GM12878 (cell line): ENCODE measurements at regions of chr12 and their contacts with region 1.

Region 1: GRCh38 chr12:46153268-46153872 is 115.5 kb downstream of the SLC38A1 start:
- DNase-seq: no peak
- ATAC-seq: peak; percentile 56
- H3K4me3 ChIP-seq: no peak overlapping the region
- H3K27ac ChIP-seq: no peak overlapping the region
- H3K4me1 ChIP-seq: no peaks in the 10 kb centered on the region
- H3K27me3 ChIP-seq: no peaks in the 10 kb centered on the region
- CTCF ChIP-seq: peak; percentile 59 to 76 (median 64); a peak in 5 of 6 replicates
- EP300 ChIP-seq: no peak
- POLR2A ChIP-seq: no peak
- RAD21 ChIP-seq: peak; percentile 93

Region 2: DNA sequence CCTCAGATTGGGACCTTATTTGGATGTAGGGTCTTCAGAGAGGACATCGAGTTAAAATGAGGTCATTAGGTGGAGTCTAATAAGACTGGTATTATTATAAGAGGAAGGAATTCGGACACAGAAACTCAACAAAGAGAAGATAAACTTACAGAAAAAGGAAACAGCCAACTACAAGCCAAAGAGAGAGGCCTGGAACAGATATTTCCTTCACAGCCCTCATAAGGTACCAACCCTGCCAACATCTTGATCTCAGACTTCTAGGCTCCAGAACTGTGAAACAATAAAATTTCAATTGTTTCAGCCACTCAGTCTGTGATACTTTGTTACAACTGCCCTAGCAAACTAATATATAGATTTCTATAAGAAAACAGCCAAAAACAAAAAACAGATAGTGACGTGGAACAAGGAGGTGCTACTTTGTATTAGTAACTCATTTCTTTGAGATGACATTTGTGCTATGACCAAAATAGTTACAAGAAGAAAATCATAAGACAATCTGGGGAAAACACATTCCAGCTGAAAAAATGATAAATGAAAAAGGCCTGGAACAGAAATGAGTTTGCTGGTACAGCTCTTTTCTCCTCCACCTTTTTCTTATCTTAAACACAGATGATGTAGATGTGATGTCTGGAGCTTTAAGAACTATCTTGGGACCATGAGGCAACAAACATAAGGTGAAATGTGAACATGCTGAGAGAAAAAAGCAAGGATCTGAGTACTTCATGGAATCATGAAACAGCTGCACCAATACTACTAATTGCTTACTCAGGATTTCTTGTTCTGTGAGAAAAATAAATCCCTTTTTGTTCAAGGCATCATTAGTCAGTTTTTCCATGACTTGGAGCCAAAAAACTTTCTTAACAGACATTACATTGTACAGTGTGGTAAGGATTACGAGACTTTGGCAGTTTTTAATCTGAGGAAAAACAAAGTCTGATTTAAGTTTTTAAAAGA is 694.2 kb before region 1 on chr12:
- CTCF ChIA-PET with region 1: no interaction called
- POLR2A ChIA-PET with region 1: no interaction called
- RAD21 ChIA-PET with region 1: no interaction called
- SMC1A ChIA-PET with region 1: no interaction called
- in situ Hi-C with region 1: no loop called
- intact Hi-C with region 1: no loop called
- DNase-seq: no peak
- ATAC-seq: no peak
- H3K4me3 ChIP-seq: no peak overlapping the region
- H3K27ac ChIP-seq: no peak overlapping the region
- H3K4me1 ChIP-seq: no peaks in the 10 kb centered on the region
- H3K27me3 ChIP-seq: no peaks in the 10 kb centered on the region; a peak in 1 of 4 replicates
- CTCF ChIP-seq: no peak
- EP300 ChIP-seq: no peak
- POLR2A ChIP-seq: no peak
- RAD21 ChIP-seq: no peak

Region 3: DNA sequence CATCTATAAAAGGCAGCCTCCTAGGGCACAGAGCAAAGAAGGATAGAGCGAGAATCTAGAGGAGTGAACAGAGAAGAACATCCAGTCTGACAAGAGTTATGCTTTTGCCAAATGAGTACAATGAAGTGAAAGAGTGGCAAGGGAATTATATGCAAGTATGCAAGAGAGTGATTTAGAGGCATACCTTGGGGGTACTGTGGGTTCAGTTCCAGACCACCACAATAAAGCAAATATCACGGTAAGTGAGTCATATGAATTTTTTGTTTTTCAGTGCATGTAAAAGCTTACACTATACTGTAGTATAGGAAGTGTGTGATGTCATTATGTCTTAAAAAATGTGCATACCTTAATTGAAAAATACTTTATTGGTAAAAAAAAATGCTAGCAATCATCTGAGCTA is 14.0 kb after region 1 on chr12:
- CTCF ChIA-PET with region 1: interaction called, 11 read pairs
- POLR2A ChIA-PET with region 1: no interaction called
- RAD21 ChIA-PET with region 1: interaction called, 3 read pairs
- SMC1A ChIA-PET with region 1: interaction called, 35 read pairs
- in situ Hi-C with region 1: no loop called
- intact Hi-C with region 1: no loop called
- DNase-seq: no peak
- ATAC-seq: no peak
- H3K4me3 ChIP-seq: no peak overlapping the region
- H3K27ac ChIP-seq: no peak overlapping the region
- H3K4me1 ChIP-seq: no peaks in the 10 kb centered on the region
- H3K27me3 ChIP-seq: no peaks in the 10 kb centered on the region
- CTCF ChIP-seq: no peak
- EP300 ChIP-seq: no peak
- POLR2A ChIP-seq: no peak
- RAD21 ChIP-seq: no peak

Region 4: DNA sequence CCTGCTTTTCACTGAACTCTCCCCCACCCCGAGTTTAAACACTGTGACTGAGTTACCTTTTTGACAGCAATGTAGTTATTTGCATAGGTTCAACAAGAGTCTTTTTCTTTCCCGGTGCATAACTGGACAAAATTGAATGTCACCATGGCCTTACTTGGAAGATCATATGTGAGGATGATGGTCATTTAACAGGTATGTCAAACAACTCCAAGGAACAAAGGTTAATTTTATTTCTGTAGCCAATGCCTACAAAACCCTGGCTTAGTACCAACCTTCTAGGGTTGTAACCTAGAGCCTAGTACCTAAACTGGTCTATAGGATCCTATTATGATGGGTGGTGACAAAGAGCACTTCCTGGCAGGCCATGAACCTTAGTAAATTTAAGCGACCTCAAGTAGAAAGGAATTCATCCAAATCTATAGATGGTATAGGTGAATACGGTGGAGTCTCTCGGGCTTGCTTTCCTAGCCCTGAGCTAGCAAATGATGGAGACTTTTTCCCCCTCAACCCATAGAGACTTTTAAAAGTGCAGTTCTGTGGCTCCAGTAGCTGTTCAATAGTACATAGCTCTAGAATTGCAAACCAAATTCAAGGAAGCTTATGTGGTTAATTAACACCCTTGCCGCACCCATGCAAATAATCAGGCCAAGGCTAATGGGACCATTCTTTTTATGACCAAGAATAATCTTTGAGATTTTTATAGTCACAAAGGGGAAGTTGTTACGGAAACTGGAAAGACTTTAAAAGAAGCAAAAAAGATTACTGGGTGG is 26.5 kb after region 1 on chr12:
- CTCF ChIA-PET with region 1: interaction called, 30 read pairs
- POLR2A ChIA-PET with region 1: interaction called, 8 read pairs
- RAD21 ChIA-PET with region 1: interaction called, 14 read pairs
- SMC1A ChIA-PET with region 1: interaction called, 10 read pairs
- in situ Hi-C with region 1: no loop called
- intact Hi-C with region 1: loop called (anchors 2 kb)
- DNase-seq: peak; percentile 76
- ATAC-seq: peak; percentile 70
- H3K4me3 ChIP-seq: no peak overlapping the region
- H3K27ac ChIP-seq: peak overlapping the region; percentile 47
- H3K4me1 ChIP-seq: peaks cover 34% of the 10 kb centered on the region
- H3K27me3 ChIP-seq: no peaks in the 10 kb centered on the region
- CTCF ChIP-seq: no peak
- EP300 ChIP-seq: peak; percentile 78 to 85; a peak in 3 of 4 replicates
- POLR2A ChIP-seq: no peak
- RAD21 ChIP-seq: no peak

Region 5: DNA sequence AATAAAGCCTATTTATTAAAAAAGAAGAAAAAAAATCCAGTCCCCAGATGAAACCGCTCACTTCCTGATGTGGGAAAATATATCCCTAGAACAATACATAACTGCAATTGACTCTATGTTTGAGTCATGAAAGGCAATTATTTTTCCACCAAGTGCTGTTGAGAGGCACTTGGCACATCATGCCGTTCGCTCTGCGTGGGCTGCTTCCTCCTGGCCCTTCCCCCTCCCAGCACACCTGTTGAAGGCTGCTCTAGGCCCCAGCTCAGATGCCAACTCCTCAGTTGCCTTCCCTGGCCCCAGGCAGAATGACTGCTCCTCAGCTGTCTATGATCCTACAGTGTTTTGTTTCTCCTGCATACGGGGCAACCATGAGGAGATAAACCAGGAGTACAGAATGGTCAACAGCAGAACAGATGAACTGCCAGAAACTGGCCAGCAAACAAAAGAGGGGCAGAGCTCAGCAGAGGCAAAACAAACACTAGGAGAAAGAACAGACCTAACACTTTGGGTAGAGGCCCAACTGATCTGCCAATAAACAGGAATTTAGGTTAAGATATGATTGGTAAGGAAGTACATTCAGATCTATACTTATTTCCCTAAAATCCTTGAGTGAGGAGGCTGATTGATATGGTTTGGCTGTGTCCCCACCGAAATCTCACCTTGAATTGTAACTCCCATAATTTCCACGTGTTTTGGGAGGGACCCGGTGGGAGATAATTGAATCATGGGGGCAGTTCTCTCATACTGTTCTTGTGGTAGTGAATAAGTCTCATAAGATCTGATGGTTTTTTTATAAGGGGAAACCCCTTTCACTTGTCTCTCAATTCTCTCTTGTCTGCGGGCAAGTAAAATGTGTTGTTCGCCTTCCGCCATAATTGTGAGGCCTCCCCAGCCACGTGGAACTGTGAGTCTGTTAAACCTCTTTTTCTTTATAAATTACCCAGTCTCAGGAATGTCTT is 56.8 kb after region 1 on chr12:
- CTCF ChIA-PET with region 1: interaction called, 7 read pairs
- POLR2A ChIA-PET with region 1: no interaction called
- RAD21 ChIA-PET with region 1: interaction called, 17 read pairs
- SMC1A ChIA-PET with region 1: interaction called, 30 read pairs
- in situ Hi-C with region 1: no loop called
- intact Hi-C with region 1: loop called (anchors 2 kb)
- DNase-seq: peak; percentile 68
- ATAC-seq: peak; percentile 84
- H3K4me3 ChIP-seq: no peak overlapping the region
- H3K27ac ChIP-seq: peak overlapping the region; percentile 85
- H3K4me1 ChIP-seq: peaks cover 59% of the 10 kb centered on the region
- H3K27me3 ChIP-seq: no peaks in the 10 kb centered on the region
- CTCF ChIP-seq: no peak
- EP300 ChIP-seq: peak; percentile 83 to 86
- POLR2A ChIP-seq: peak; percentile 52; the same call in 1 of the 2 replicates
- RAD21 ChIP-seq: no peak

Region 6: DNA sequence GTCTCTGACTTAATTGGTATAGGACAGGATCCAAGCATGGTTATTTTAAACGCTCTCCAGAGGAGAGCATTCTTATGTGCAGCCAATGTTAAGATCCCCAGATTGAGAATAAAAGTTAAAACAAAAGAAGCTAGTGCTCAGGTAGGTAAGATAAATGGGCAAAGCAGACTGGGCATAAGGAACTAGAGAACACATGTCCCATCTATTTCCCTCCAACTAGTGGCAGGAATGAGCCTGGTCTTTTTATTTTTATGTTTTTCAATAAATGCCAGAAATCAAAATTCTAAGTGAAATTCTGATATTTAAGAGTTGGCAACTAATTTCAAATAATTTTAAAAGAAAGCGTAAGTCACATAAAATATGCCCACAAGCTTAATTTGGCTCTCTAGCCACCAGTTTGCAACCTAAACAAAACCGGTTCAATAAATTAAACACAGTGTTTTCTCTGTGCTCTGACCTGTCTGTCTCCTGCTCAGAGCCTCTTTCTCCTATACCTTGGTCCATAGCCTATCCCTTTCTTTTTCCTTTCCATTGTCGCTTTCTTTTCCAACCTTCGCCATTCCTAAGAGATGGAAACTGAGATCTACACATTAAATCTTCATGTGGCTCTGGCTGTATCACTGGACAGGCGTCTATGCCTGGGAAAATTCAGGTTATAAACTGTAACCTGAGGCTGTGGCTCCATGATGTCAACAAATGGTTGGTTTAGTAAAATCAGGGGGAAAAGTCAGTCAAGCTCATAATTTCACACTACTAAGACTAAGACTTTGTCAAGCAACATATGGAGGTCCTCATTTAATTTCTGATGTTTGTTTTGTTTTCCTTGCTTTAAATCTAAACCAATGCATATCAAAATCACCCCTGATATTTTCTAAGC is 110.0 kb after region 1 on chr12:
- CTCF ChIA-PET with region 1: interaction called, 3 read pairs
- POLR2A ChIA-PET with region 1: no interaction called
- RAD21 ChIA-PET with region 1: interaction called, 8 read pairs
- SMC1A ChIA-PET with region 1: interaction called, 14 read pairs
- in situ Hi-C with region 1: no loop called
- intact Hi-C with region 1: loop called (anchors 2 kb)
- DNase-seq: no peak
- ATAC-seq: no peak
- H3K4me3 ChIP-seq: peak overlapping the region; percentile 11
- H3K27ac ChIP-seq: peak overlapping the region; percentile 35
- H3K4me1 ChIP-seq: peaks cover 12% of the 10 kb centered on the region; the same call in 1 of the 2 replicates
- H3K27me3 ChIP-seq: no peaks in the 10 kb centered on the region
- CTCF ChIP-seq: no peak
- EP300 ChIP-seq: no peak
- POLR2A ChIP-seq: no peak
- RAD21 ChIP-seq: no peak

Region 7: GRCh38 chr12:46364777-46365580 is 211.6 kb after region 1 on chr12:
- CTCF ChIA-PET with region 1: interaction called, 6 read pairs
- POLR2A ChIA-PET with region 1: no interaction called
- RAD21 ChIA-PET with region 1: interaction called, 5 read pairs
- SMC1A ChIA-PET with region 1: interaction called, 6 read pairs
- in situ Hi-C with region 1: no loop called
- intact Hi-C with region 1: loop called (anchors 5 kb)
- DNase-seq: no peak
- ATAC-seq: peak; percentile 37
- H3K4me3 ChIP-seq: peak overlapping the region; percentile 34; the same call in 1 of the 2 replicates
- H3K27ac ChIP-seq: peak overlapping the region; percentile 22
- H3K4me1 ChIP-seq: peaks cover 37% of the 10 kb centered on the region
- H3K27me3 ChIP-seq: no peaks in the 10 kb centered on the region
- CTCF ChIP-seq: no peak
- EP300 ChIP-seq: 0 out of 4 replicates have a peak, but pooled peaks of 1 of the 2 experiments have one; percentile 42
- POLR2A ChIP-seq: no peak
- RAD21 ChIP-seq: no peak

Region 8: GRCh38 chr12:47021298-47021697 is 867.9 kb after region 1 on chr12:
- CTCF ChIA-PET with region 1: interaction called, 6 read pairs
- POLR2A ChIA-PET with region 1: no interaction called
- RAD21 ChIA-PET with region 1: interaction called, 3 read pairs
- SMC1A ChIA-PET with region 1: interaction called, 10 read pairs
- in situ Hi-C with region 1: loop called (anchors 25 kb)
- intact Hi-C with region 1: no loop called
- DNase-seq: peak; percentile 11
- ATAC-seq: peak; percentile 78
- H3K4me3 ChIP-seq: no peak overlapping the region
- H3K27ac ChIP-seq: no peak overlapping the region
- H3K4me1 ChIP-seq: no peaks in the 10 kb centered on the region
- H3K27me3 ChIP-seq: no peaks in the 10 kb centered on the region
- CTCF ChIP-seq: peak; percentile 50 to 68 (median 66)
- EP300 ChIP-seq: no peak
- POLR2A ChIP-seq: no peak
- RAD21 ChIP-seq: peak; percentile 80